A549 (cell line): ENCODE measurements at regions of chrX and their contacts with region 1.

Region 1: DNA sequence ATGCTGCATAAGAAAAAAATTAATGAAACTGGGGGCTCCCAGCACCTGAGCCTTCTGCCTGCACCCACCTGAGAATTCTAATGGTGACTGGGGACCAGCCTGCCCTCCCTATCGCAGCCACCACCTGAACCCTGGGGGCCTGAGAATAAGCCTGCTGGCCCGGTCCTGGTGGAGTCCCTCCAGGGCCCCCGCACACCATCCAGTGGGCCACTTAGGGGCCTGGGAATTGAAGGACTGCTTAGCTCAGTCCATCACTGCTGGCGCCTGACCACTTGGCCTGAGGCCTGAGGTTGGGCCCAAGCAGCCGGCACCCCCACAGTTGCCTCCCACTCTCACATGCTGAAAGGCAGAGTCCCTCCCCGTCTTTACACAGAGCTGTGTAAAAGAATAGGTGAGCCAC is 230.8 kb downstream of the ENOX2 start:
- DNase-seq: no peak
- ATAC-seq: no peak
- H3K4me3 ChIP-seq: no peak overlapping the region
- H3K27ac ChIP-seq: no peak overlapping the region
- H3K4me1 ChIP-seq: 0 out of 3 replicates have a peak, but pooled peaks cover 8% of the 10 kb centered on the region
- CTCF ChIP-seq: no peak
- EP300 ChIP-seq: no peak
- POLR2A ChIP-seq: no peak
- RAD21 ChIP-seq: no peak

Region 2: DNA sequence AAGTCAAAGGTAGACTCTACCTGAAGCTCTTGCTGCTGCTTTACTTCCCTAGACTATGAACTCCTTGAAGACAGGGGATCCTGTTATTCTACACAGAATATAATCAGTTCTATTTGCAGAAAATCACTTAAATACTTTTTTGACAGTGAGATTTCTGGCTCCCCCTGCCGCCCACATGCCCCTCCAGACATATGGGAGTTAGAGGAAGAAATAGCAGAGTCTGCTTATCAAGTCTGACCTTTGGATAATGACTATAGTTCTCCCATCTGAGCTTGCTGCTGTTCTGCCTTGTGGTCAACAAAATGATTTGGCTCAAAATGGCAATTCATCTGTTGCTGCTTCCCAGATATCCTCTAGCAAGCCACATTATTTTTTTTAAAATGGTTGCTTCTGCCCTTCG is 129.7 kb after region 1 on chrX:
- CTCF ChIA-PET with region 1: no interaction called
- POLR2A ChIA-PET with region 1: no interaction called
- DNase-seq: no peak
- ATAC-seq: no peak
- H3K4me3 ChIP-seq: no peak overlapping the region
- H3K27ac ChIP-seq: no peak overlapping the region
- H3K4me1 ChIP-seq: no peaks in the 10 kb centered on the region
- CTCF ChIP-seq: no peak
- EP300 ChIP-seq: no peak
- POLR2A ChIP-seq: no peak
- RAD21 ChIP-seq: no peak

Region 3: GRCh38 chrX:130902783-130903613 is 230.8 kb after region 1 on chrX and contains the start of gene ENOX2:
- CTCF ChIA-PET with region 1: no interaction called
- POLR2A ChIA-PET with region 1: interaction called, 12 read pairs
- DNase-seq: peak; percentile 90 to 97
- ATAC-seq: peak; percentile 99 to 100
- H3K4me3 ChIP-seq: peak within 1 kb of the TSS; percentile 51
- H3K27ac ChIP-seq: peak within 1 kb of the TSS; percentile 90 to 98
- H3K4me1 ChIP-seq: peaks cover 5% of the 10 kb centered on the region; the same call in 1 of the 3 replicates
- CTCF ChIP-seq: no peak
- EP300 ChIP-seq: no peak
- POLR2A ChIP-seq: peak; percentile 68
- RAD21 ChIP-seq: no peak
- polyA plus RNA-seq, gene ENOX2: 34.8 and 35.5 TPM in 2 replicates